AG04450 (cell line): ENCODE measurements at regions of chr20 and their contacts with region 1.

Region 1: DNA sequence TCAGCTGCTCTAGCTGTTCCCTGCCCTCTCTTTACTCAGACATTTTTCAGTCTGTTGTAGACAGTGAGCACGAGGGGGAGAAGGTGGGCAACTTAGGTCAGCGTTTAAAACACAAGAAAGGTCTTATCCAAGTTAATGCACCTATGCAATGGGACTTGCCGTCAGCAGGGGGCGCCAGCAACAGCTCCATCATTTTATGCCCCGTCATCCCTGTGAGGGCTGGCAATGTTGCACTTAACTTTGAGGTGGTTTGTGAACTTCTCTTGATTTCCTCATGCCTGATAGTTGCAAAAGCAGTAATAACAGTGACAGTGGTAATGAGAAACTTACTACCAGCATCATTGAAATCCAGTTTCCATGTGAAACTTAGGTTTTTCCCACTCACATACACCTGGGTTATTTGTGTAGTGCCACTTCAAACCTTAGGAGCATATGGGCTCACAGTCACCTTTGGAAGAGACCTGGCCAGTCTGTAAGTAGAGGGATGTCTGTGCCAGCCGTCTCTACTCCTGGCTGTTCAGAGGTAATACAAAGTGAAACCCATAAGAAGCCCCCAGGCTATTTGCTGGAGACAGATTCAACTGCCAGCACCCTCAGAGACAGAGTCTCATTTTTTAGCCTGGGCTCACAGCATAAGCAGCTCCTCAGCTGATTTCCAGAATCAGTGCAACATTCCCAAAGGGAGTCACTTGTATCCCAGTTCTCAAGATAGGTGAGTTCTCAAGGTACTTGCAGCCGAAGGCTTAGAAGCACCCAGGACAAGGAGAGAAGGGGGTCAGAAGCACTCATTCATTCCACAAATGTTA is 44.8 kb upstream of the ID1 start:
- DNase-seq: peak; percentile 62
- H3K4me3 ChIP-seq: no peak overlapping the region
- H3K27ac ChIP-seq: peak overlapping the region; percentile 99
- H3K27me3 ChIP-seq: no peaks in the 10 kb centered on the region
- CTCF ChIP-seq: peak; percentile 94

Region 2: GRCh38 chr20:31394900-31395299 is 165.4 kb before region 1 on chr20:
- CTCF ChIA-PET with region 1: no interaction called
- POLR2A ChIA-PET with region 1: no interaction called
- DNase-seq: no peak
- H3K4me3 ChIP-seq: no peak overlapping the region
- H3K27ac ChIP-seq: no peak overlapping the region
- H3K27me3 ChIP-seq: no peaks in the 10 kb centered on the region
- CTCF ChIP-seq: no peak

Region 3: DNA sequence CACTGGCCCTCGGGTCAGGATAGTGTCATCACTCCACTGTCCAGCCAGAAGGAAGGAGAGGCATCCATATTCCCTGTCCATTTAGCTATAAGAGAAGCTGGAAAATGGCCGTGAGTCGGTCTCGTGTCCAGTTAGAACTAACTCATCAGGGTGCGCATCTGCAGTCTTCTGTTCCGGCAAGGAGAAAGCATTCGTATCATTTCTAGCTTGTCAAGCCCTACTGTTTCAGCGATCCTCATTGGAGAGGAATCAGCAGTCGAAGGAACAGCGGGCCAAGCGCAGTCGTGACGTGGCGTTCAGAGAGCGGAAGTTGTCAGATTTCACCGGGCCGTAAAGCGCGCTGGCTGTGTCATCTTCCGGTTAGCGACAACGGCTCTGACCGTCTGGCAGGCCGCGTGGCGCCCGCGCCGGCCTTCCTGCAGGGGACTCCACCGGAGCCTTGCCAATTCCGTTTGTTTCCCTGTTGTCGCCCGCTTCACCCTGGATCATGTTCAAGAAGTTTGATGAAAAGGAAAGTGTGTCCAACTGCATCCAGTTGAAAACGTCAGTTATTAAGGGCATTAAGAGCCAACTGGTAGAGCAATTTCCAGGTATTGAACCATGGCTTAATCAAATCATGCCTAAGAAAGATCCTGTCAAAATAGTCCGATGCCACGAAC is 13.2 kb before region 1 on chr20:
- CTCF ChIA-PET with region 1: interaction called, 95 read pairs
- POLR2A ChIA-PET with region 1: interaction called, 8 read pairs
- DNase-seq: peak; percentile 65
- H3K4me3 ChIP-seq: peak overlapping the region; percentile 49
- H3K27ac ChIP-seq: peak overlapping the region; percentile 90
- H3K27me3 ChIP-seq: no peaks in the 10 kb centered on the region
- CTCF ChIP-seq: no peak

Region 4: GRCh38 chr20:31595654-31596411 is 35.5 kb after region 1 on chr20:
- CTCF ChIA-PET with region 1: interaction called, 24 read pairs
- POLR2A ChIA-PET with region 1: interaction called, 4 read pairs
- DNase-seq: peak; percentile 68
- H3K4me3 ChIP-seq: no peak overlapping the region
- H3K27ac ChIP-seq: peak overlapping the region; percentile 82
- H3K27me3 ChIP-seq: no peaks in the 10 kb centered on the region
- CTCF ChIP-seq: no peak

Region 5: GRCh38 chr20:31630187-31630790 is 70.0 kb after region 1 on chr20:
- CTCF ChIA-PET with region 1: interaction called, 16 read pairs
- POLR2A ChIA-PET with region 1: interaction called, 3 read pairs
- DNase-seq: no peak
- H3K4me3 ChIP-seq: no peak overlapping the region
- H3K27ac ChIP-seq: no peak overlapping the region
- H3K27me3 ChIP-seq: no peaks in the 10 kb centered on the region
- CTCF ChIP-seq: no peak

Region 6: GRCh38 chr20:31894980-31895675 is 334.8 kb after region 1 on chr20:
- CTCF ChIA-PET with region 1: no interaction called
- POLR2A ChIA-PET with region 1: no interaction called
- DNase-seq: no peak
- H3K4me3 ChIP-seq: no peak overlapping the region
- H3K27ac ChIP-seq: no peak overlapping the region
- H3K27me3 ChIP-seq: peaks cover 16% of the 10 kb centered on the region
- CTCF ChIP-seq: no peak